HCT116 (cell line): ENCODE measurements at regions of chr1 and their contacts with region 1.

Region 1: DNA sequence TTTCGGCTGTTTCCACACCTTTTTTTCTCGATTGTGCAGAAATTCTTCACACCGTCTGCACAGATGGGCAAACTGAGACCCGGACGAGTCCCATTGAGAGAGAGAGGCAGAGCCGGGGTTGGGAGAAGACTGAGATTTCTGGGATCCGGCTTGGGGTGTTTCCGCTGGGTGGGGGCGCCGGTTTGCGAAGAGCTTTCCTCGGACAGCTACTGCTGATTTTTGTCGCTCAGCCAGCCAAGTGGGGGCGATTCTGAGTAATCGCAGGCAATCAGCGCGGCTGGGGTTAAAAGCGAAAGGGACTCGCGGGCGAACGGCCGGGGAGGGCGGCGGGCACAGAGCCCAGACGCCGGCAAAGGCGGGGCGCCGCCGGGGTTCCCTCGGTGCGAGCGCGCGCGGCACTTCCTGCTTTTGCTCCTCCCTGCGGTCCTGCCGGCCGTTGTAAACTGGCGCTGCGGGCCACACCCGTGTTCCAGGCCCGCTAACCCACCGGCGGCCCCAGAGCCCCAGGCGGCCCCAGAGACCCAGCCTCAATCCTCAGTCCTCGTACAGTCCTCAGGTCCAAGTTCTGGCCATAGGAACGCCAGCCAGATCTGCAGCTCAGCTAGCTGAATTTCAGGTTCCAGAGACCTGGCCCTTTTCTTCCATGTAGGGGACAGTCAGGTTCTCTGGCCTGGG is 32.4 kb upstream of the JUN start:
- DNase-seq: peak; percentile 51
- ATAC-seq: peak; percentile 73
- H3K4me3 ChIP-seq: peak overlapping the region; percentile 53 to 63
- H3K27ac ChIP-seq: peak overlapping the region; percentile 80
- H3K4me1 ChIP-seq: peaks cover 22 to 44% of the 10 kb centered on the region in 2 experiments; a peak in 3 of 4 replicates
- H3K27me3 ChIP-seq: no peaks in the 10 kb centered on the region
- CTCF ChIP-seq: no peak
- POLR2A ChIP-seq: no peak
- RAD21 ChIP-seq: peak; percentile 54

Region 2: GRCh38 chr1:58628987-58629598 is 187.1 kb before region 1 on chr1:
- CTCF ChIA-PET with region 1: no interaction called
- POLR2A ChIA-PET with region 1: no interaction called
- RAD21 ChIA-PET with region 1: no interaction called
- intact Hi-C with region 1: no loop called
- DNase-seq: no peak
- ATAC-seq: no peak; the same call in 1 of the 2 replicates
- H3K4me3 ChIP-seq: no peak overlapping the region
- H3K27ac ChIP-seq: no peak overlapping the region
- H3K4me1 ChIP-seq: peaks cover 0 to 9% of the 10 kb centered on the region in 2 experiments; a peak in 2 of 4 replicates
- H3K27me3 ChIP-seq: no peaks in the 10 kb centered on the region
- CTCF ChIP-seq: no peak
- POLR2A ChIP-seq: no peak
- RAD21 ChIP-seq: no peak

Region 3: GRCh38 chr1:58755468-58755872 is 60.7 kb before region 1 on chr1:
- CTCF ChIA-PET with region 1: no interaction called
- POLR2A ChIA-PET with region 1: no interaction called
- RAD21 ChIA-PET with region 1: no interaction called
- intact Hi-C with region 1: no loop called
- DNase-seq: peak; percentile 70
- ATAC-seq: peak; percentile 83
- H3K4me3 ChIP-seq: peak overlapping the region in 1 of 2 experiments; percentile 14; a peak in 1 of 4 replicates
- H3K27ac ChIP-seq: peak overlapping the region; percentile 54
- H3K4me1 ChIP-seq: peaks cover 28 to 44% of the 10 kb centered on the region in 2 experiments
- H3K27me3 ChIP-seq: no peaks in the 10 kb centered on the region
- CTCF ChIP-seq: no peak
- POLR2A ChIP-seq: peak; percentile 36
- RAD21 ChIP-seq: no peak

Region 4: DNA sequence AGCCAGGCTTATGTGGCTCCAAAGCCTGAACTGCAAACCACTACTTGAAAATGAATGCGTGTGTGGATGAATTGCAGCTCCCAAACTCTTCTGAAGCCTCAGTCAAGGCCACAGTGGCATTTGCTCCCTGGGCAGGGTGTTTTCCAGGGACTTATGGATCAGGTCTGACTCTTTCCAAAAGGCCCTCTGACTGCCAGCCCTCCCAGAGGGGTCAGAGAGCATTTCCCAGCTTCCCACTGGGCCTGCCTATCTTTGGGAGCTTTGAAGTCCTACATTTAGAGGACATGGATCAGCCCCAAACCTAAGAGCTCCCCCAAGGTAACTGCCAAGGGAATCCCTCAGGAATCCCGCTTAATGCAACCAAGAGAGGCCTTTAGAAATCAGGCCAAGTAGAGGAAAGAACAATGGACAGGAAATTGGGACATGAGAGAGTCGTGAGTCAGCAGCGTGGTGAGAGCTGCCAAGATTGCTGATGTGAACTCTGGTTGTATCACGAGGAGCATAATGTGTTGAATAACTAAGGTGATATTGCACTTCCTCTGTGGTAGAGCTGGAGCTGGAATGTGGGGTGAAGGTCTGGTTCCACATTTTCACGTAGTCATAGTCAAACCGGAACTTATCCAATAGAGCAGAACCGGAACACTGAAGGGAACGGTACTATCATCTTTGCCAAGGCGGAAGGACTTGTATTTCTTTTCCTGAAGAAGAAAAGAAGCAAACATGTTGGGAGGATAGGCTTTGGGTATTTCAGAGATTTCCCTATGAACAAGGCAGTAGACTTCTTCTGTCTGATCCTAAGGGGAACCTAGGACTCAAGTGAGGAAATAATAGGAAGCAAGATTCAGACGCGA is 67.1 kb after region 1 on chr1:
- CTCF ChIA-PET with region 1: no interaction called
- POLR2A ChIA-PET with region 1: no interaction called
- RAD21 ChIA-PET with region 1: no interaction called
- intact Hi-C with region 1: loop called (anchors 5 kb)
- DNase-seq: peak; percentile 85
- ATAC-seq: peak; percentile 63
- H3K4me3 ChIP-seq: peak overlapping the region in 1 of 2 experiments; percentile 14; a peak in 2 of 4 replicates
- H3K27ac ChIP-seq: peak overlapping the region; percentile 53
- H3K4me1 ChIP-seq: peaks cover 48 to 56% of the 10 kb centered on the region in 2 experiments
- H3K27me3 ChIP-seq: no peaks in the 10 kb centered on the region
- CTCF ChIP-seq: no peak
- POLR2A ChIP-seq: no peak
- RAD21 ChIP-seq: peak; percentile 34; the same call in 1 of the 2 replicates

Region 5: DNA sequence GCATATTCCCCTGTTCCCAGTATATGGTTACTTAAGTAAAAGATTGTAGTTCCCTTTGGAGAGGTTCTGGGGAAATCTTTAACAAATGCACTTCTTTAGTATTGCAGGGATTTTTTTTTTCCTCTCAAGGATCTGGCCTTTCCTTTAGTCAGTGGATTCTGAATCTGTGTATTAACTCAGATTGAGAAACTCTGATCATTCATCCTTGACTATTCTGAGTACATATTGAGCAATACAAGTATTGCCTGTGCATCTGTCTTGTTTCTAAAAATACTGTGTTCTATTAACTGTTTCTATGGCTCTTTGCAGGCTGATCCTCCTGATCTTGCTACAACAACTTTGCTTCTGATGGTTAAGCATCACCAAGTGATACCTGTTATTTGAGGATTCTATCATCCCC is 412.9 kb after region 1 on chr1:
- CTCF ChIA-PET with region 1: no interaction called
- POLR2A ChIA-PET with region 1: no interaction called
- RAD21 ChIA-PET with region 1: no interaction called
- intact Hi-C with region 1: no loop called
- DNase-seq: no peak
- ATAC-seq: no peak
- H3K4me3 ChIP-seq: no peak overlapping the region
- H3K27ac ChIP-seq: no peak overlapping the region
- H3K4me1 ChIP-seq: no peaks in the 10 kb centered on the region
- H3K27me3 ChIP-seq: no peaks in the 10 kb centered on the region
- CTCF ChIP-seq: no peak
- POLR2A ChIP-seq: no peak
- RAD21 ChIP-seq: no peak